ENCODE measurements at regions of chr2 and their contacts with region 1.

Region 1: GRCh38 chr2:149313512-149313972 is 16.8 kb upstream of the LYPD6 start:
- ATAC-seq: peak; percentile 67 to 98 (median 94)
- H3K4me3 ChIP-seq: no peak overlapping the region
- H3K27ac ChIP-seq: no peak overlapping the region
- H3K4me1 ChIP-seq: peaks cover 5 to 18% of the 10 kb centered on the region in 2 donors

Region 2: GRCh38 chr2:148901142-148901541 is 412.4 kb before region 1 on chr2:
- in situ Hi-C with region 1: no loop called
- ATAC-seq: no peak
- H3K4me3 ChIP-seq: no peak overlapping the region
- H3K27ac ChIP-seq: no peak overlapping the region
- H3K4me1 ChIP-seq: peaks cover 22 to 36% of the 10 kb centered on the region in 2 donors

Region 3: DNA sequence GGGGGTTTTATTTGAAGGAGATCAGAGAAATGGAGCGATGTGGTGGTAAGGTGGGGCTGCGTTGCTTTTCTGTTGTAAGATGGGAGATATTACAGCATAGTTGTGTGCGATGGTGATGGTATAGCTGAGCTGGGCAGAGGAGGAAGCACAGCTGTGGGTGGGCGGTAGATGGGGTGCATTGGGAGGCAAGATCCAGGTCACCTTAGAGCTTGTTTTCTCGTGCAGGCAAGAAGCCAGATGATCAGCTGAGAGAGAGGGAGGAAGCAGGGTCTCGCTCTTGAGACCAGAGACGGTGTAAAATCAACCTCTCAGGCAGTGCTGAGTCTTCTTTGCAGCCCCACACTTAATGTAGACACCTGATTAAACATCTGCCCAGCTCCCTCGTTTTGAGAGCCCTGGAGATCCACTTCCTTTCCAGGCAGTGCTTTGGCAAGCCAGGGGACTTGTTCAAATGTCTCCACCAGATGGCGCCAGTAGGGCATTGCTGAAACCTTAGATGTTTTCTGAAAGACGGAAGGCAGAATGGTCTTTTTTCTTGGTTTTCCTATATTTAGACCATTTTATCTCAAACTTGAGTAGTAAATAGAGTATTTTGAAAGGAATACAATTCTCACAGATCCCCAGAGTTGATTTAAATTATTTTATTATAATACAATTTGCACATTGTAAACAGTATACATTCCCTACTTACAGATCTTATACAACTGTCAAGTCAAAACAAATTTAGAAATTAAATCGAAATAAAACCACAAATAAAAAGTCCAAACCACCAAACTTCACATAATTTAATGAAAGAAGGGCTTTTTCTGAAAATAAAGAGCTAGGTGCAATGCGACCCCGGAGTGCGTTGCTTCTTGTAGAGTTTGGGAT is 296.2 kb before region 1 on chr2:
- in situ Hi-C with region 1: loop called in 2 of 9 experiments (anchors 5 to 25 kb)
- ATAC-seq: peak; percentile 65 to 88 (median 74)
- H3K4me3 ChIP-seq: no peak overlapping the region
- H3K27ac ChIP-seq: no peak overlapping the region
- H3K4me1 ChIP-seq: no peaks in the 10 kb centered on the region

Region 4: GRCh38 chr2:149040451-149040850 is 273.1 kb before region 1 on chr2:
- in situ Hi-C with region 1: loop called in 1 of 9 experiments (anchors 25 kb)
- ATAC-seq: peak in 2 of 8 experiments; percentile 32 to 34
- H3K4me3 ChIP-seq: no peak overlapping the region
- H3K27ac ChIP-seq: no peak overlapping the region
- H3K4me1 ChIP-seq: no peaks in the 10 kb centered on the region

Measured in motor neuron (in vitro differentiated cells).